Activated naive CD4-positive, alpha-beta T cell treated with anti-CD3 and anti-CD28 coated beads for 36 hours (primary cell): ENCODE measurements at regions of chr1 and their contacts with region 1.

Region 1: GRCh38 chr1:52686830-52687229 is 11.3 kb downstream of the COA7 start:
- DNase-seq: no peak
- H3K4me3 Mint-ChIP-seq: no peak overlapping the region
- H3K27ac Mint-ChIP-seq: no peak overlapping the region
- H3K4me1 Mint-ChIP-seq: peaks cover 9% of the 10 kb centered on the region
- H3K27me3 Mint-ChIP-seq: no peaks in the 10 kb centered on the region

Region 2: GRCh38 chr1:51897699-51898031 is 789.2 kb before region 1 on chr1:
- CTCF ChIA-PET with region 1: no interaction called
- intact Hi-C with region 1: loop called (anchors 5 kb)
- DNase-seq: no peak
- H3K4me3 Mint-ChIP-seq: no peak overlapping the region
- H3K27ac Mint-ChIP-seq: no peak overlapping the region
- H3K4me1 Mint-ChIP-seq: peaks cover 2% of the 10 kb centered on the region
- H3K27me3 Mint-ChIP-seq: peaks cover 25% of the 10 kb centered on the region

Region 3: GRCh38 chr1:52141513-52142219 is 545.2 kb before region 1 on chr1 and contains the start of gene ZFYVE9:
- CTCF ChIA-PET with region 1: interaction called, 3 read pairs
- intact Hi-C with region 1: loop called (anchors 1 kb)
- DNase-seq: peak; percentile 66
- H3K4me3 Mint-ChIP-seq: peak within 1 kb of the TSS; percentile 84
- H3K27ac Mint-ChIP-seq: peak within 1 kb of the TSS; percentile 68
- H3K4me1 Mint-ChIP-seq: peaks cover 40% of the 10 kb centered on the region
- H3K27me3 Mint-ChIP-seq: no peaks in the 10 kb centered on the region
- total RNA-seq, gene ZFYVE9: 3.0 to 3.5 TPM

Region 4: DNA sequence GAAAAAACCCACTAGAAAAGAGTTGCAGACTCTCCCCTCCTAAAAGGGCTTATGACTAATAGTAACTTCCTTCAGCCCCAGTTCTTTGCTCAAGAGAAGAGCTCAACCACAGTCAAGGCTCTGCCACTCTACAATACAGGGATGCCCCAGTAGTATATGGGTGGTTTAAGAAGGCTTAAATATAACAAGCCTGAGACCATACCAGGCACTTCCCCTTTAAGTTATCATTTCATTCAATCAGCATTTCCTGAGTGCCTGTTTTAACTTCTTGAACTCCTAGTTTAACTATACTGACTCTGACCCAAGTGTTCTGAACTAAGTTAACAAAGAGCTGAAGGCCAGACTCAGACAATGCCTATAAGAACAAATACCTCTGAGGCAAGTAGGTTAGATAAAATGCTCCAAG is 262.6 kb before region 1 on chr1:
- CTCF ChIA-PET with region 1: interaction called, 5 read pairs
- intact Hi-C with region 1: loop called (anchors 5 kb)
- DNase-seq: peak; percentile 34
- H3K4me3 Mint-ChIP-seq: peak overlapping the region; percentile 57
- H3K27ac Mint-ChIP-seq: peak overlapping the region; percentile 83
- H3K4me1 Mint-ChIP-seq: peaks cover 51% of the 10 kb centered on the region
- H3K27me3 Mint-ChIP-seq: no peaks in the 10 kb centered on the region

Region 5: GRCh38 chr1:52636721-52637695 is 49.8 kb before region 1 on chr1:
- CTCF ChIA-PET with region 1: no interaction called
- intact Hi-C with region 1: loop called (anchors 1 kb)
- DNase-seq: peak; percentile 84
- H3K4me3 Mint-ChIP-seq: peak overlapping the region; percentile 73
- H3K27ac Mint-ChIP-seq: peak overlapping the region; percentile 98
- H3K4me1 Mint-ChIP-seq: peaks cover 79% of the 10 kb centered on the region
- H3K27me3 Mint-ChIP-seq: no peaks in the 10 kb centered on the region